HEK293T (cell line): ENCODE measurements at regions of chr5 and their contacts with region 1.

Region 1: DNA sequence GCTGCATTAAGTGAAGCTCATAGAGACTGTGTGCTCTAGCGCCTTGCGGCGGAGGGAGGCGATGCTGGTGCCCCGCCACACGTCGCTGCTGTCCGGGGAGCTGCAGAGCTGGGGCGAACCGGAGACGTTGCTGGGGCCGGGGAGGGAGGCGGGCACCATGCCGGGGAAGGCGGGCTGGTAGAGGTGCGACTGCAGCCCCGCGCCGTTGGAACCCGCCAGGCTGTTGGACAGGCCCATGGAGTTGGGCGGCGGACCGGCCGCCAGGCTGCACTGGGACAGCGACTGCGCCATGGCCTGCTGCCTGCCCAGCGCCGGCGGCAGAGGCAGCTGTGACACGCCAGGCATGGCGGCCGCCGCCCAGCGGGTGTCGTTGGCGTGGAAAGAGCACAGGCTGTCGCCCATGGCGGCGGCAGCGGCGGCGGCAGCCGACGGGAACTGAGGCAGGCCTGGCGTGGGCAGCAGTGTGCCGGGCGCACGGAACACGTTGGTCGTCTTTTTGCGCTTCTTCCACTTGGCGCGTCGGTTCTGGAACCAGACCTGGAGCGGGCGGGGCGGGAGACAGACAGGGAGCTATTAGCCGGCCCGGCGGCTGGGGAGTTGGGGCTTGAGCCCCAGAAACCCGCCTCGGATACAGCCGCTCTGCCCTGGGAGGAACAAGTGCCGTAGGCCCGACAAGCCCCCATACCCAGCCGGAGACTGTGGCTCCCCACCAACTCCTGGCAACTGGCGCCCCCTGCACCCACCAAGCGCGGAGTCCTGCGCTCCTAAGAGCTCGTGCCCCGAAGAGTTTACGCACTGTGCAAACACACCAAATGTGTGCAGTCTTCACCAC is 8.0 kb downstream of the OTP start:
- DNase-seq: peak; percentile 77

Region 2: GRCh38 chr5:77426670-77427069 is 203.8 kb before region 1 on chr5:
- CTCF ChIA-PET with region 1: no interaction called
- POLR2A ChIA-PET with region 1: no interaction called
- DNase-seq: no peak

Region 3: DNA sequence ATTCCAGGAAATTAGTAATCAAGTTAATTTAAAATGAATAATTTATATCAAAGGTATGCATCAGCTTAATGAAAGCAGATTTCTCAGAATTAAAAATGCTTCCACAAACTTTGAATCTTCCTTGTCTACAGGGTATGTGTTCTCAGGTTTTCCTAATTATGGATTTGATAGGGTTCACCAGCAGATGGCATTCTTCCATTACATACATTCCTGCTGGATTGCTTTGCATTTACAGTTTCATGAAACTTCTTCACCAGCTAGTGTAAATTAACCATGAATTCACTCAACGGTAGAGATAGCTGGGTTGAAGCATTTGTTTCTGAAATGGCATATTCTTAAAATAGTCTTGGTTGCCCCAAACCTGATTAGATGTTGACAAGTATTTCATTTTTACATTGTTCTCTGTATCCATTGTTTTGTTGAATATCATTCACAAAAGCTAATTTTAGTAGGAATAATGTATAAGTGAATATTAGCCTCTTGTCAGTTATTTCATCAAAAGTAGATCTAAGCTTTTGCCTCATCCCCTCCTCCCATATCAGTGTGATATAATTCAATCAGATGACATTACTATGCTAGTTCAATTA is 69.7 kb before region 1 on chr5:
- CTCF ChIA-PET with region 1: interaction called, 7 read pairs
- POLR2A ChIA-PET with region 1: interaction called, 12 read pairs
- DNase-seq: peak; percentile 42

Region 4: GRCh38 chr5:77620426-77620825 is 10.0 kb before region 1 on chr5:
- CTCF ChIA-PET with region 1: interaction called, 4 read pairs
- POLR2A ChIA-PET with region 1: interaction called, 15 read pairs
- DNase-seq: no peak